BJ (cell line): ENCODE measurements at regions of chr15 and their contacts with region 1.

Region 1: GRCh38 chr15:98647774-98648653 is at the start of gene IGF1R:
- DNase-seq: no peak
- H3K4me3 ChIP-seq: peak within 1 kb of the TSS; percentile 95
- H3K27me3 ChIP-seq: peaks cover 9% of the 10 kb centered on the region
- CTCF ChIP-seq: 0 out of 2 replicates have a peak, but pooled peaks have one; percentile 22
- polyA plus RNA-seq, gene IGF1R: 21.2 and 36.2 TPM in 2 replicates

Region 2: DNA sequence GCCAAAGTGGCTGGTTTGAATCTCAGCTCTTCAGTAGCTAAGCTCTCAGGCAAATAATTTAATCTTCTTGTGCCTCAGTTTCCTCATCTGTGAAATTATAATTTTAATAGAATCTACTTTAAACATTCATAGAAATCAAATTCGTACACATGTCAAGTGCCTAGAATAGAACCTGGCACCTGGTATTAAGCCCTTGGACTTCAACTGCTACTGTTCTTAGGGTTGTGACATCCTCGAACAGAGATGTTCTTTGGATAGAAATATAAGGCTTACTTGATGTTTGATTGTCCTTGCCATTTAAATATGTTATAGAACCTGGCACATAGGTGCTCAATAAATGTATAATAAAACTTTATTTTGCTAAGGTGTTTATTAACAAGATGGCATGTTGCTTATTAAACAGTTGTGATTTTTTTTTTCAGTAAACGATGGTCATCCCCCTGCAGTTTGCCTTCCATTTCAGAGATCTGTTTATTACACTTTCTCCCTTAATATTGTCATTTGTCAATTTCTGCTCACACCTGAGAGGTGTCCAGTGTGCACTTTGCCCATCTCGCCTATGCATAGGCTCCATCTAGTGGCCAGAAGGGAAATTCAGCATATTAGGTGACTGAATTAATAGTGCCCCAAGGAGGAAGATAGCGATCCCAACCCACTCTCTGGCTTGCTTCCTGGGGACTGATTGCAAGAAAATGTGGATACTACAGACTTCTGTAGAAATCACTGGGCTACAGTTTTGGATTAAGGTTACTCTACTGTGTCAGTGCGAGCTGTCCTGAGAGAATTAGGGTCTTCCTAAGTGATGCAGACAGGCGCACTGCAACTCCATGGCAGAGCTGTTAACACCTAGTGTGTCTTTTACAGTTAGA is 11.1 kb after region 1 on chr15:
- CTCF ChIA-PET with region 1: interaction called, 11 read pairs
- POLR2A ChIA-PET with region 1: no interaction called
- DNase-seq: no peak
- H3K4me3 ChIP-seq: no peak overlapping the region
- H3K27me3 ChIP-seq: no peaks in the 10 kb centered on the region
- CTCF ChIP-seq: peak; percentile 90

Region 3: GRCh38 chr15:99909592-99910295 is 1261.7 kb after region 1 on chr15:
- CTCF ChIA-PET with region 1: no interaction called
- POLR2A ChIA-PET with region 1: no interaction called
- DNase-seq: no peak
- H3K4me3 ChIP-seq: no peak overlapping the region
- H3K27me3 ChIP-seq: no peaks in the 10 kb centered on the region
- CTCF ChIP-seq: no peak